AG04450 (cell line): ENCODE measurements at regions of chr2 and their contacts with region 1.

Region 1: DNA sequence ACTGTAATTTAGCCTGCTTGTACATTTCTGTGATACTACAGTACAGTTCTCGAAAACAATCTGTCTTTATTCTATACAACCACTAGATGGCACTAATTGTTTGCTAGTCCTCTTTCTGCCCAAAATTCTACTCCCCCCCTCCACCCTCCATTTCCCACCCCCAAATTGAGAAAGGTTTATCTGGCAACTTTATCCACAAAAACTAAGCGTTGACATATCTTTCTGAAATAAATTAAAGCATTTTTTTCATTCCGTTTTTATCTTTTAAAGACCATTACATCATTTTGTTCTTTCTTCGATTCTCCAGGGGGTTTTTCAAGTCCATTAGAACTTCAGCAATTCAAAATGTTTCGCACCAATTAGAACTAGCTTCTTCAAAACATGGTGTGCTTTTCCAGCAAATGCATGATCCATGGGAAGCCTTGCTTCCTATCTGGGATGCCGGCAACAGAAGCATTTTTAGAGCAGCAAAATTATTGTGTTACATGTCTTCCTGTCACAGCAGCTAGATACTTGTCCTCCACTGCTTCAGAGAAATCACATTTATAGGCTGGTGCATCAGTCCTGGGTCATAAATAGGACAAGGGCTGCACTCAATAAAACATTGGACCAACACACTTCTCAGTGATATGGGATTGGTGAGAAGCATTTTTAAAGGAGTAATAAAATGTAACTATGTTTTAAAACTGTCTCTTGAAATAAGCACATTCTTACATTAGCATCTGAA is 241.3 kb downstream of the PAX3 start:
- DNase-seq: no peak
- H3K4me3 ChIP-seq: no peak overlapping the region
- H3K27ac ChIP-seq: no peak overlapping the region
- H3K27me3 ChIP-seq: no peaks in the 10 kb centered on the region
- CTCF ChIP-seq: peak; percentile 67

Region 2: GRCh38 chr2:221844212-221845028 is 213.1 kb before region 1 on chr2:
- CTCF ChIA-PET with region 1: no interaction called
- POLR2A ChIA-PET with region 1: no interaction called
- DNase-seq: no peak
- H3K4me3 ChIP-seq: no peak overlapping the region
- H3K27ac ChIP-seq: no peak overlapping the region
- H3K27me3 ChIP-seq: no peaks in the 10 kb centered on the region
- CTCF ChIP-seq: no peak

Region 3: GRCh38 chr2:222038067-222038802 is 19.3 kb before region 1 on chr2:
- CTCF ChIA-PET with region 1: interaction called, 25 read pairs
- POLR2A ChIA-PET with region 1: no interaction called
- DNase-seq: no peak
- H3K4me3 ChIP-seq: no peak overlapping the region
- H3K27ac ChIP-seq: no peak overlapping the region
- H3K27me3 ChIP-seq: no peaks in the 10 kb centered on the region
- CTCF ChIP-seq: peak; percentile 56